Tibial artery (tissue), 4 donors: ENCODE measurements at regions of chrX and their contacts with region 1.

Region 1: DNA sequence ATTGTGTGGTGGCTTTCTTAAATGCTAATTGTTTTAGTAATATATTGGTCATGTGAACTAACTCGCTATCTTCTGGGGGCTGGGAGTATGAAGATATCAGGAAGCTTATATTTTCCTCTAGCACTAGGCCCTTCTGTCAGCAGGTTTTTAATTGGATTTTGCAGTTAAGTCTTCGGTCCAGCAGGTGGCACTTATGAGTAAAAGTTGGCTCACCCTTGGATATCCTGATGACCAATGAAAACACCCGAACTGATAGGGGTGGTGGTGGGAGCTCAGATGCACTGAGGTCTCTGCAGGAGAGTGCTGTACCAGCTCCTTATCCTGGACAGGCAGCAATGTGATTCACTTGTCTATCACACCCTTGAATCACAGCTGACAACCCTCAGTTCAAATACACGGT is 1365.8 kb upstream of the DIAPH2 start:
- DNase-seq: no peak
- H3K4me3 ChIP-seq: no peak overlapping the region
- H3K27ac ChIP-seq: no peak overlapping the region
- H3K4me1 ChIP-seq: no peaks in the 10 kb centered on the region
- H3K27me3 ChIP-seq: no peaks in the 10 kb centered on the region
- CTCF ChIP-seq: no peak

Region 2: GRCh38 chrX:95383778-95384177 is 64.9 kb after region 1 on chrX:
- intact Hi-C with region 1: loop called (anchors 2 kb)
- DNase-seq: no peak
- H3K4me3 ChIP-seq: no peak overlapping the region
- H3K27ac ChIP-seq: no peak overlapping the region
- H3K4me1 ChIP-seq: no peaks in the 10 kb centered on the region
- H3K27me3 ChIP-seq: no peaks in the 10 kb centered on the region
- CTCF ChIP-seq: no peak

Region 3: GRCh38 chrX:95539041-95539440 is 220.2 kb after region 1 on chrX:
- intact Hi-C with region 1: no loop called
- DNase-seq: no peak
- H3K4me3 ChIP-seq: no peak overlapping the region
- H3K27ac ChIP-seq: no peak overlapping the region
- H3K4me1 ChIP-seq: no peaks in the 10 kb centered on the region
- H3K27me3 ChIP-seq: no peaks in the 10 kb centered on the region
- CTCF ChIP-seq: no peak